ENCODE measurements at regions of chr5 and their contacts with region 1.

Region 1: GRCh38 chr5:83927140-83927733 is 206.6 kb upstream of the HAPLN1 start:
- DNase-seq: no peak
- H3K4me3 ChIP-seq: no peak overlapping the region
- H3K27ac ChIP-seq: no peak overlapping the region
- H3K27me3 ChIP-seq: no peaks in the 10 kb centered on the region
- CTCF ChIP-seq: peak; percentile 77

Region 2: GRCh38 chr5:83877911-83878706 is 49.1 kb before region 1 on chr5:
- CTCF ChIA-PET with region 1: interaction called, 10 read pairs
- POLR2A ChIA-PET with region 1: no interaction called
- DNase-seq: no peak
- H3K4me3 ChIP-seq: no peak overlapping the region
- H3K27ac ChIP-seq: no peak overlapping the region
- H3K27me3 ChIP-seq: no peaks in the 10 kb centered on the region
- CTCF ChIP-seq: no peak

Region 3: DNA sequence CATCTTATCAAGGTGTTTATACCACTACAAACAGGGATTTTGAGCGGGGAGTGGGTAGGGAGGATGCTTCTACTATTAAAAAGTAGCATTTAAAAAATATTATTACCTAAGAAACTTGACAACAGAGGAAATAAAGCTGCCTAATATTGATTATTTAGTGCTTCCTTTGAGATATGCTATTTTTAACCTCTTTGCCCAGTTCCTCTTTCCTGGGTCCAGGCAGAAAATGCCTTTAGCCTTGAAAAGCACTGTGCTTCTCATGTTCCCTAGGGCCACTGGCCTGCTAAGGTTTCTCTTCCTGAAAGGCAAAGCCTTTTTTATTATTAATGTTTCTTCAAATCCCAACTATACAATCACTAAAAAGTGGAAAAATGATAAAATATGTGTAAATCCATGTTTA is 10.6 kb after region 1 on chr5:
- CTCF ChIA-PET with region 1: interaction called, 20 read pairs
- POLR2A ChIA-PET with region 1: no interaction called
- DNase-seq: no peak
- H3K4me3 ChIP-seq: no peak overlapping the region
- H3K27ac ChIP-seq: no peak overlapping the region
- H3K27me3 ChIP-seq: no peaks in the 10 kb centered on the region
- CTCF ChIP-seq: no peak

Region 4: DNA sequence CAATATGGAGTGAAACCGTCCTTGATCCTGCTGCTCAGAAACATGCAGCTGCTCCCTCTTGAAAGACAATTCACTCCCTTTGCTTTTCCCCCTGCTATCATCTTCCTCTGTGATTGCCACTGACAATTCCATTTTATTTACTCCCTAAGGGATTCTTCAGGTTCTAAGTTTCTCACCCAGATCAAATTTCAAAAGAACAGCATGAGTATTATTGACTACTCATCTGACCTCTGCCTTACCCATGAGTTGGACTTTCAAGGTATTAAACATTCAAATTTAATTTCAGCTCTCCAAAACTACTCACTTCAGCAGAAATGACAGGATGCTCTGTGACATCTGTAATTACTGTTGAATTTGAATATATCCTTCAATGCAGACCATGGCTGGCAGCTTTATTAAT is 30.0 kb after region 1 on chr5:
- CTCF ChIA-PET with region 1: interaction called, 19 read pairs
- POLR2A ChIA-PET with region 1: no interaction called
- DNase-seq: no peak
- H3K4me3 ChIP-seq: no peak overlapping the region
- H3K27ac ChIP-seq: no peak overlapping the region
- H3K27me3 ChIP-seq: no peaks in the 10 kb centered on the region
- CTCF ChIP-seq: no peak

Region 5: DNA sequence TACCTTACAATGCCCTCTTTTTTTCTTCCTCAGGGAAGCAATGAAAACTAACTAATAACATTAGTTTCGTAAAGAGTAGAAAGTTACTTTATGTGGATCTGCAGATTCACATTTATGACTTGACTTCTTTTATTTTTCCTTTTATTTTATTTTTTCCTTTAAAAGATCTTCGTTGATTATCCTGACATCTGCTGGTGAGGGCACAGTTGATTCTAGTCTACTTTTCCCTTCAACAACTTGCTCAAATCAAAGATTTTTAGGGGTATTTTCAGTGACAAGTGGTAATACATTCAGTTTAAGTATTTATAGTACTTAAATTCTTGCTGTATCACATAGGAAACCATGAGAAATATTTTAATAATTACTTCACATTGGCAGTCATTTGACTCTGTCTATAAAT is 452.5 kb after region 1 on chr5:
- CTCF ChIA-PET with region 1: interaction called, 16 read pairs
- POLR2A ChIA-PET with region 1: interaction called, 3 read pairs
- DNase-seq: no peak
- H3K4me3 ChIP-seq: no peak overlapping the region
- H3K27ac ChIP-seq: no peak overlapping the region
- H3K27me3 ChIP-seq: no peaks in the 10 kb centered on the region
- CTCF ChIP-seq: peak; percentile 37

Measured in AG04450 (cell line).